HEK293 (cell line): ENCODE measurements at regions of chr10 and their contacts with region 1.

Region 1: GRCh38 chr10:4849555-4850242 is 23.7 kb downstream of the AKR1E2 start:
- H3K4me3 ChIP-seq: no peak overlapping the region
- H3K27ac ChIP-seq: no peak overlapping the region
- H3K4me1 ChIP-seq: no peaks in the 10 kb centered on the region
- CTCF ChIP-seq: peak; percentile 93

Region 2: GRCh38 chr10:4820804-4821401 is 28.8 kb before region 1 on chr10:
- CTCF ChIA-PET with region 1: interaction called, 12 read pairs
- POLR2A ChIA-PET with region 1: no interaction called
- H3K4me3 ChIP-seq: no peak overlapping the region
- H3K27ac ChIP-seq: no peak overlapping the region
- H3K4me1 ChIP-seq: no peaks in the 10 kb centered on the region
- CTCF ChIP-seq: no peak

Region 3: DNA sequence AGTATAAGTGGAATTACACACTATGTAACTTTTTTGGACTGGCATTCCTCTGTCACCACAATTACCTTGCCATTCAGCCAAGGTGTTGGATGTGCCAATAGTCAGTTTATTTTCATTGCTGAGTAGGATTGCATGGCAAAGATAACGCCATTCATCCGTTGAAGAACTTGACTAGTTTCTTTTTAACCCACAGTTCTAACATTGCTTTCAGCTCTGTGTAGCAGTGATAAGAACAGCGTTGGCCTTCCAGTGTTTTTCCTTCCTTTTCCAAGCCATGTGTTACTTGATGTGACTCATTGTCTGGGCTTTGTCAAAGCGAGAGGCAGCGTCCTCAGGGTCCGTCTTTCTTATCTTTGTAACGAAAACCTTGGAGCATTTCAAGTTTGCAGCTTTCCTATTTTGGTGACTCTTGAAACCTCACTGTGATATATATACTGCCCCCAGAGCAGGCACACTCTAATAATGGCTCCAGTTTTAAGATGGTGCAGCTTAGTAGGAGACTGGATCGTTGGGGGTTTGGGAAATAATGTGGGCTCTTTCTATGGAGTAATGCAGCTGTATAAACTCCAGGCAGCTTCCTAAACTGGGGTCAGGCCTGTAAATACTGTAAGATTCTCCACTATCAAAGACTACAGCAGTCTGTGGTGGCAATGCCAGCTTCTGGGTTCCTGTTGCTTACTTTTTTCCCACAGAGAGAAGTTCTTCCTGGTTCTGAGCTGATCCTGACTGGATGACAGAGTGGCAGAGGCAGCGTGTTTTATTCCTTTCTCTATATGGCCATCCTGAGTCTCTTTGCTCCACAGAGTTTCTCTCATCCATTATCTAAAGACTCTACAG is 18.0 kb after region 1 on chr10:
- CTCF ChIA-PET with region 1: interaction called, 16 read pairs
- POLR2A ChIA-PET with region 1: no interaction called
- H3K4me3 ChIP-seq: no peak overlapping the region
- H3K27ac ChIP-seq: no peak overlapping the region
- H3K4me1 ChIP-seq: no peaks in the 10 kb centered on the region
- CTCF ChIP-seq: no peak

Region 4: DNA sequence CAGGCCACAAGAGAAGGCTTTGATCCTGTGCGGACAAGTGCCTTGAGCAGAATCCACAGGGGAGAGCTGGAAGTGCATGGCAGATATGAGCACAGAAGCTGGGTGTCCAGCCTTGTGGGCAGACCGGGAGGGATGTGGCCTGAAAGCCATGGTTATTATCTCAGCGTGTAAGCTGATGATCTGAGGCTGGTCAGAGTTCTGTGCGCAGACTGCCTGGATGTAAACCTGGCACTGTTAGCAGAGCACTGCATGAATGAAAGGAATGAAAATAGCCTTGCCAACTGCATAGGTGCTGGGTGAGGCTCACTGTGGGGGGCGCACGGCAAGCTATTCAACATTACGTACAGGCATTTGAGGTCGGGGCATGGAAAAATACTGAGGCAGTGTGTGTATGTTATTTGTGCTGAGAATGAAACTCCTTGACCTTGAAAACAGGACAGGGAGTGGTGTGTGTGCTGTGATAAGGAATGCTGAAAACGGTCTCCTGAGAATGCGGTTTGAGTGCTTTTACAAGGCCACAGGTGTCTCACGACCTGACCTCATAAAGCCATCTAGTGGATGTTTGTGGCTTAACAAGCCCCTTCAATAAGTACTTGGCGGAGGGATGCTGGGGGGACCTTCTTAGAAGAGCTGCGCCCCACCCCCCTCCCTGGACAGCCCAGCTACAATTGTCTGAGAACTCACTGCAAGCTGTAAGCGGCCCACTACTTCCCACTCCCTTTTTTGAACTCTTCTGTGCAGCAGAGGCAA is 132.2 kb after region 1 on chr10:
- CTCF ChIA-PET with region 1: interaction called, 26 read pairs
- POLR2A ChIA-PET with region 1: no interaction called
- H3K4me3 ChIP-seq: no peak overlapping the region
- H3K27ac ChIP-seq: no peak overlapping the region; the same call in 1 of the 2 replicates
- H3K4me1 ChIP-seq: no peaks in the 10 kb centered on the region
- CTCF ChIP-seq: no peak

Region 5: GRCh38 chr10:5103481-5103880 is 253.8 kb after region 1 on chr10:
- CTCF ChIA-PET with region 1: interaction called, 11 read pairs
- POLR2A ChIA-PET with region 1: no interaction called
- H3K4me3 ChIP-seq: no peak overlapping the region
- H3K27ac ChIP-seq: no peak overlapping the region
- H3K4me1 ChIP-seq: no peaks in the 10 kb centered on the region
- CTCF ChIP-seq: no peak

Region 6: DNA sequence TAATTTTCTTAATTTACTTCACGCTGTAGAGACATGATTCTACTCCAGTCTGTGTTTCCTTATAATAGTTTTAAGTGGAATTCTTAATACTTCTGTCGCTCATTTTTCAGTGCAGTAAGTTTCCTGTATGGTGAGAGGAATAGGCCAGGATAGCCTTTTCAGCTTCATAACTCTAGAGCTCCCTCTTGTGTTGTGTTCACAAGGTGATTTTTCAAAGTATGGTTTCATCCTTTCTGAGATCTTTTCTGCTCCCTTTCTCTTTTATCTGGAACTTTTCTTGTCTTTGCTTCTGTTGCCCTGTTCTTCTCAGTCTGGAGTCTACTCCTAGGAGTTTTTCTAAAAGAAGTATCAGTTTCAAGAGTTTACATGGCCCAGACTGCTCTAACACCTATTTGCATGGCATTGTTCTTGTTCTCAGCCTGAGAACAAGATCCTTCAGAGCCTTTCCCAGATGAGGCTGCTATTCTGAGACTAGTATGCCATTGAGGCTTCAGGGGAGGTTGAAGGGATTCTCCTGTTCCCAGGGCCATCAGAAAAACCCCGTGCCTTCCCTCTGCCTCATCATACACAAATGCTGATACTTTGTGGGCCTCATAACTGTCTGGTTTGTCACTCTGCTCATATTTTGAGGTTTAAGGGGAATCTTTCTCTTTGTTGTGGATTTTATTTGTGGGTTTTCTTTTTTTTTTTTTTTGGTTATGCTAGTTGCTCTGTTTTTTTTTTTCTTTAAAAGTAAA is 584.5 kb after region 1 on chr10:
- CTCF ChIA-PET with region 1: interaction called, 19 read pairs
- POLR2A ChIA-PET with region 1: no interaction called
- H3K4me3 ChIP-seq: no peak overlapping the region
- H3K27ac ChIP-seq: no peak overlapping the region
- H3K4me1 ChIP-seq: no peaks in the 10 kb centered on the region
- CTCF ChIP-seq: no peak; the same call in 1 of the 2 replicates